A549 (cell line): ENCODE measurements at regions of chr7 and their contacts with region 1.

Region 1: DNA sequence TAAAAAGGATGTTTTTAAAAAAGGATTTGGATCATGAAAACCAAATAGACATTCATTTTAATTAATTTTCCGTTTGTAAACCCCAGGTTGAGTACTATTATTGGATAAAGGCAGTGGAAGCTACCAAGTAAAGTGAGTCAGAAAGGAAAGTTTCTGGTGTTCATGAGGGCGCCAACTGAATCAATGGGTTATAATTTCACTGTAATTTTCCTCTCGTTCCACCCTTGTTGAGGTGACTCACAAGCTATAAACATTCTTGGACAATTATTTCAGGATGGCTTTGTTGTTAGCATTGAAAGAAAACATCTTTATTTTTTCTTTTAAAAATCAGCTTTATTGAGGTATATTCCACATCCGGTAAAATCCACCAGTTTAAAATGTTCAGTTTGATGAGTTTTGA is 5.1 kb upstream of the FAM133B start:
- DNase-seq: no peak
- ATAC-seq: no peak
- H3K4me3 ChIP-seq: no peak overlapping the region
- H3K27ac ChIP-seq: no peak overlapping the region
- H3K4me1 ChIP-seq: no peaks in the 10 kb centered on the region
- CTCF ChIP-seq: no peak
- EP300 ChIP-seq: no peak
- POLR2A ChIP-seq: no peak
- RAD21 ChIP-seq: no peak

Region 2: DNA sequence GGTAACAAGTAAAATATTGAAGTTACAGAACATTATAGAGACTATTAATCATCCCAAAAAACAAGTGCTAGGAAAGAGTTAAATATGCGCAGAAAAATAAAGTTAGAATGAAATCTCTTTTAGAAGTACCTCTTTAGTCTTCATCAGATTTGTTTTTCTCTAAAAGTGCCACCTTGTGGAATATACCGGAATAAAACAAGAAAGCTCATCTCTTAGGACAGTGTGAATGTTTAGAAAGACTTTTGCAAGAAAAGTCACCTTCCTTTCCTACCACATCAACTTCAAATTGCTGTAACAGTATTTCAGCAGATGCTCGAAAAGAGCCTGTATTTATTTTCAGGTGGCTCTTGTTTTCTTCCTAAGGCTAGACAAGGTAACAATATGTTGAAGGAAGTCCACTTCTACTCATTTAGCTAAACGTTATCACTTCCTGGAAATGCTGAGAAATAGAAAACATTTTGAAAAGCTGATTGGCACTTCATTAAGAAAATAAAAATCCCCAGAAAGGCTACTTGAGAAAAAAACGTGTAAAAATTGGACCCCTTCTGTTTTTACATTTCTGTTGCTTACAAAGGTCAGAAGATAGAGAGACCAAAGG is 14.7 kb after region 1 on chr7:
- CTCF ChIA-PET with region 1: interaction called, 42 read pairs
- POLR2A ChIA-PET with region 1: interaction called, 9 read pairs
- DNase-seq: peak in 1 of 2 experiments; percentile 43
- ATAC-seq: peak; percentile 66 to 84; a peak in 4 of 6 replicates
- H3K4me3 ChIP-seq: no peak overlapping the region
- H3K27ac ChIP-seq: no peak overlapping the region
- H3K4me1 ChIP-seq: no peaks in the 10 kb centered on the region
- CTCF ChIP-seq: peak; percentile 52; the same call in 2 of the 3 replicates
- EP300 ChIP-seq: no peak
- POLR2A ChIP-seq: no peak
- RAD21 ChIP-seq: peak in 1 of 2 experiments; percentile 31; a peak in 2 of 5 replicates